RWPE1 (cell line): ENCODE measurements at regions of chr12 and their contacts with region 1.

Region 1: DNA sequence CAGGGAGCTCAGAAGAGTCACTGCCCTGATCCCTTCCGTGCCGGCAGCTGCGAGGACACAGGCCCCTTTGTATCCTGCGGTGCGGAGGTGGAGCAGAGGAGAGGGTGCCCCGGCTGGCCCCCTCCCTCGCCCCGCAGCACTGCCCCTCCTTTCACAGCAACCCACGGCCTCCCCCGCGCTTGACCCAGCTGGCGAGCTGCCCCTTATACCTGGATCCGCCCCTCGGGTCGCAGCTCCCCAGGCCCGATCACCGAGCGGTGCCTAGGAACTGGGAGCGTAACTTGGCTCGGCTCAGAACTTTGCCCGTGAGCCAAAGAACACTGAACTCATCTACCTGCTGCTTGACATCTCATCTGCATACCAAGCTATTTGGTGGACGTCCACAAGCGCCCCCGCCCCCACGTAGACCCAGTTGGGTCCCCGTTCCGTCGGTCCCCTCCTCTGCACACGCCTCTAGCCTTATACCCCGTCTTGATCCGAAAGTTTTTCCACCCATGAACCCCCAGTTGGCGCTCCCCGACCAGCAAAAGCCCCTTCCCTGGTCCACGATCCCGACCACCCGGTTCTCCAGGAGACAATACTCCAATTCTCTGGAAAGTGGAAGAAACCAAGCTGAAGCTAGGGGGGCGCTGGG is 697 bp upstream of the DNAJC14 start:
- DNase-seq: peak; percentile 30
- H3K27ac ChIP-seq: peak overlapping the region; percentile 96
- CTCF ChIP-seq: no peak

Region 2: DNA sequence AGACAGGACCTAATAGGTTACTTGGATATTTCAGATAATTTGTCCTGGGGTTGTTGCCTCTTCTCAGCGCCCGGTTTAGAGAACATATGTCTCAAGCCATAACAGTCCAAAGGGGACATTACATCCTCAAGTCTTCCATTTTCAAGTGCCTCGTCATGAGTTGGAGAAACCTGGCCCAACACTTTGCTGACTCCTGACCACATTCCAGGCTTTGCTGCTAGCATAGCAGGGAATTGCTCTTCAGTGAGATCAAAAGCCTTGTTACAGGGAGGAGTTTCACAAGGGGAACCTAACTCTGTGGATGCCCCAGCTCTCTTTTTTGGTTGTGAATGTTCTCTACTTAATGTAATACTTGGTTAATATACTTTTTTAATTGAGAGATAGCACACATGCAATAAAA is 20.8 kb after region 1 on chr12:
- CTCF ChIA-PET with region 1: no interaction called
- POLR2A ChIA-PET with region 1: no interaction called
- DNase-seq: no peak
- H3K27ac ChIP-seq: no peak overlapping the region
- CTCF ChIP-seq: no peak

Region 3: GRCh38 chr12:55893723-55894122 is 63.6 kb after region 1 on chr12:
- CTCF ChIA-PET with region 1: no interaction called
- POLR2A ChIA-PET with region 1: no interaction called
- DNase-seq: no peak
- H3K27ac ChIP-seq: no peak overlapping the region
- CTCF ChIP-seq: no peak

Region 4: DNA sequence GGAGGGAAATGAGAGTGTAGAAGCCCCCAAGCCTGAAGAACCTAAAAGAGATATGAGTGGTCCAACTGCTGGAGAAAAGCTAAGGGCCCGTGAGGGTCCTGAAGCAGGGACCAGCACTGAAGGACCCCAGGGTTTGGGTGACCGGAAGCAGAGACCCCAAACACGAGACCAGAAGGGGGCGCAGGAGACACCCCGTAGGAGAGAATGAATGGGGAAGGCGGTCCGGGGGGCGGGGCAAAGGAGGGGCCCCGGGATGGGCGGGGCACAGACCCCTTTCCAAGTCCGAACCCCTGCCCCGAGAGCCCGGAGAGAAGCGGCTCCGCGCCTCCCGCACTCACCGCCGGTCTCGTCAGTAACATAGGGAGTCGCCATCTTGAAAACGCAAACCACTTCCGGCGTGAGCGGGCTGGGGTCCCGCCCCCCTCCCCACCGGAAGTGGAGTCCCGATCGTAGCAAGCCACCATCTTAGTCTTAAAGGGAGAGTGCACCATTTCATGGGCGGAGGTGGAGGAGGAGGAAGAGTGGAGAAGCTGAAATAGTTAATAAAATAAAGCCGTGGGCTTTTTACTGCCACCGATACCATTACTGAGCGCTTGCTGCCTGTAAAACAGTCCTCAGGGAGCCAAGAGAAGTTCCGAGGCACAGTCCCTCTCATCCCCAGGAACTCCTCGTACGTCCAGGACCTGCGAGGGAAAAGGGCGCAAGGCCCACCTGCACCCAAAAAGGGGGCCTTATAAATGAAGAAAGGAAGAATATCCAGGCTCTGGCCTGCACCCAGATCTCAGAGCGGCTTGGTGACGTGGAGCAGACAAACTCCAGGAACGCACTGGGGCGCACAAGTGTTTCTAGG is 96.9 kb after region 1 on chr12:
- CTCF ChIA-PET with region 1: interaction called, 6 read pairs
- POLR2A ChIA-PET with region 1: interaction called, 20 read pairs
- DNase-seq: peak; percentile 95
- H3K27ac ChIP-seq: peak overlapping the region; percentile 99
- CTCF ChIP-seq: peak; percentile 87

Region 5: DNA sequence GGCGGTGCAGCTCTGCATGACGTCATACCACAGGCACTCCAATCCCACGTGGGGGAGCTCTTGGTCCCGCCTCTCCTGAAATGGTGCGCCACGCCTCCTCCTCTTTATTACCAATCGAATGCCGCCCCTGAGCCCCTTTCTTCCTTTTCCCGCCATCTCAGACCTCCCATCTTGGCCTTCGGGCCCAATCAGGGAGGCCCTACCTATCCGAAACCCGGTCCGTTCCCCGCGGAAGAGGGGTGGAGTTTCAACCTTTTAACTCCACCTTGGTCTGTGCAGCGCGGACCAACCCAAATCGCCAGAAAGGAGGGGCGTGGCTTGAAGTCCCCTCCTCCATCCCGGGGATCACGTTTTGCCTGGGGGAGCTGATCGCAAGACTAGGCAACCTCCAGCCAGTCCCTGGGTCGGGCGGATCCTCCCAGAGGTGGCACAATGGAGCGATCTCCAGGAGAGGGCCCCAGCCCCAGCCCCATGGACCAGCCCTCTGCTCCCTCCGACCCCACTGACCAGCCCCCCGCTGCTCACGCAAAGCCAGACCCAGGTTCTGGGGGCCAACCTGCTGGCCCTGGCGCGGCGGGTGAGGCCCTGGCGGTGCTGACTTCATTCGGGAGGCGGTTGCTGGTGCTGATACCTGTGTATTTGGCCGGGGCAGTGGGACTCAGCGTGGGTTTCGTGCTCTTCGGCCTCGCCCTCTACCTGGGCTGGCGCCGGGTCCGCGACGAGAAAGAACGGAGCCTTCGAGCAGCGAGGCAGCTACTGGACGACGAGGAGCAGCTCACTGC is 298.0 kb after region 1 on chr12 and contains the start of gene ESYT1:
- CTCF ChIA-PET with region 1: no interaction called
- POLR2A ChIA-PET with region 1: no interaction called
- DNase-seq: peak; percentile 99
- H3K27ac ChIP-seq: peak within 1 kb of the TSS; percentile 91
- CTCF ChIP-seq: no peak